ENCODE measurements at regions of chr4 and their contacts with region 1.

Region 1: GRCh38 chr4:8315435-8316250 is 46.1 kb downstream of the HTRA3 start:
- DNase-seq: peak in 1 of 2 experiments; percentile 58
- H3K4me3 ChIP-seq: no peak overlapping the region
- H3K27ac ChIP-seq: no peak overlapping the region
- H3K4me1 ChIP-seq: peaks cover 0 to 17% (median 12%) of the 10 kb centered on the region in 4 experiments; a peak in 6 of 7 replicates
- H3K27me3 ChIP-seq: no peaks in the 10 kb centered on the region; a peak in 2 of 7 replicates
- CTCF ChIP-seq: no peak
- EP300 ChIP-seq: no peak
- POLR2A ChIP-seq: no peak
- RAD21 ChIP-seq: no peak

Region 2: GRCh38 chr4:7876201-7876875 is 439.3 kb before region 1 on chr4:
- CTCF ChIA-PET with region 1: no interaction called
- POLR2A ChIA-PET with region 1: no interaction called
- DNase-seq: no peak
- H3K4me3 ChIP-seq: no peak overlapping the region
- H3K27ac ChIP-seq: no peak overlapping the region
- H3K4me1 ChIP-seq: peaks cover 0 to 3% (median 0%) of the 10 kb centered on the region in 4 experiments; a peak in 1 of 7 replicates
- H3K27me3 ChIP-seq: no peaks in the 10 kb centered on the region
- CTCF ChIP-seq: peak; percentile 39 to 62 (median 42); a peak in 3 of 4 replicates
- EP300 ChIP-seq: no peak
- POLR2A ChIP-seq: no peak
- RAD21 ChIP-seq: peak; percentile 34 to 58; a peak in 3 of 4 replicates

Region 3: DNA sequence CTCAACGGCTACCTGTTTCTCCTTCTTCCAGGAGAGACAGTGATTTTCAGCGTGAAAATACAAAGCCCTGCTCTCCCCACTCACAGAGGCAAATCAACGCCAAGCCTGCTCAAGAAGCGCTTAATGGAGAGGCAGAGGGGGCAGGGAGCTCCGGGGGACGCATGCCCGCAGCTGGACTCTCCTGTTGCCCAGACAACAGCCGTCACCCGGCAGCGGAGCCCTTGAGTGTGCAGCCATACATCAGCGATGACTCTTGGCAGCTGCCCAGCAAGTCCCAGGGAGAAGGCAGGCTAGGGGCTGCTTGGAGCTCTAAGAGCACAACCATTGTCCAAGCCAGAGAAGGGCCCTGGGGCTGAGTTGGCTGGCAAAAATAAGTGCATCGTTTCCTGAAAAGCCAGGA is 305.0 kb before region 1 on chr4:
- CTCF ChIA-PET with region 1: no interaction called
- POLR2A ChIA-PET with region 1: no interaction called
- DNase-seq: no peak
- H3K4me3 ChIP-seq: no peak overlapping the region
- H3K27ac ChIP-seq: no peak overlapping the region
- H3K4me1 ChIP-seq: peaks cover 0 to 2% (median 0%) of the 10 kb centered on the region in 4 experiments; a peak in 2 of 7 replicates
- H3K27me3 ChIP-seq: no peaks in the 10 kb centered on the region
- CTCF ChIP-seq: no peak
- EP300 ChIP-seq: no peak
- POLR2A ChIP-seq: no peak
- RAD21 ChIP-seq: no peak

Region 4: GRCh38 chr4:8035371-8035780 is 280.3 kb before region 1 on chr4:
- CTCF ChIA-PET with region 1: no interaction called
- POLR2A ChIA-PET with region 1: no interaction called
- DNase-seq: no peak
- H3K4me3 ChIP-seq: no peak overlapping the region
- H3K27ac ChIP-seq: no peak overlapping the region
- H3K4me1 ChIP-seq: peaks cover 0 to 7% (median 1%) of the 10 kb centered on the region in 4 experiments; a peak in 2 of 7 replicates
- H3K27me3 ChIP-seq: no peaks in the 10 kb centered on the region
- CTCF ChIP-seq: no peak
- EP300 ChIP-seq: no peak
- POLR2A ChIP-seq: no peak
- RAD21 ChIP-seq: no peak

Region 5: DNA sequence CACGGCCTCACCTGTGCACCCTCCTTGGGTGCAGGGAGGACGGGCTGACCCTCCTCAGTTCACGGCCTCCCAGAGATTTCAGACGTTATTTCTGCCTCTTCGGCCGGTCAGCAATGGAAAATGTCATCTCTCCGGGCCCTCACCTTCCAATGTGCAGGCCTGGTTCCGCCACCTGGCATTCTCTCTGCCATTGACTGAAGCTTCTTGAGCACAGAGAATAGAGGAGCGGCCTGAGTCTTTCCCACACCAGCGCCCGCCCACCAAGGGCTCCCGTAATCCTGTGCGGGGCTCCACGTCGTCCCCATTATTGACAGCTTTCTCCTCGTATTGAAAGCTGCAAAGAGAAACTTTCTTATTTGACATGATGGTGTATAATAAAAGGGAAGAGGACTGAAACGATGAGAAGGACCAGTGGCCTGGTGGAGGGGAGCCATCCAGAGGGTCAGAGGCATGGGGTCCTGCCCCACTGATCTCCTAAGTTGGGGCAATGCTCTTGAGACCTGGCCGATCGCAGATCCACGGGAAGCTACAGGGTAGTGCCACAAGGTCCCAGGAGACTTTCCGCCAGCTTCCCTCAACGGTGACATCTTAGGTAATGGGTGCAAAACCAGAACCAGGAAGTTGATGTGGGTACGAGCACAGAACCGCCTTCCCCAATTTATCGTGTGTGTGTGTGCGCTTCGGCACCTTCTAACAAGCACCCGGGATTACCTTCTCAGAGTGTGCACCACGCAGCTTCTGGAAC is 25.5 kb before region 1 on chr4:
- CTCF ChIA-PET with region 1: interaction called, 12 read pairs
- POLR2A ChIA-PET with region 1: no interaction called
- DNase-seq: no peak
- H3K4me3 ChIP-seq: no peak overlapping the region
- H3K27ac ChIP-seq: no peak overlapping the region
- H3K4me1 ChIP-seq: no peaks in the 10 kb centered on the region
- H3K27me3 ChIP-seq: no peaks in the 10 kb centered on the region
- CTCF ChIP-seq: no peak
- EP300 ChIP-seq: no peak
- POLR2A ChIP-seq: no peak
- RAD21 ChIP-seq: no peak

Region 6: GRCh38 chr4:8330821-8331574 is 15.4 kb after region 1 on chr4:
- CTCF ChIA-PET with region 1: interaction called, 12 read pairs
- POLR2A ChIA-PET with region 1: no interaction called
- DNase-seq: no peak
- H3K4me3 ChIP-seq: no peak overlapping the region
- H3K27ac ChIP-seq: no peak overlapping the region
- H3K4me1 ChIP-seq: no peaks in the 10 kb centered on the region
- H3K27me3 ChIP-seq: no peaks in the 10 kb centered on the region
- CTCF ChIP-seq: no peak
- EP300 ChIP-seq: no peak
- POLR2A ChIP-seq: no peak
- RAD21 ChIP-seq: no peak

Region 7: DNA sequence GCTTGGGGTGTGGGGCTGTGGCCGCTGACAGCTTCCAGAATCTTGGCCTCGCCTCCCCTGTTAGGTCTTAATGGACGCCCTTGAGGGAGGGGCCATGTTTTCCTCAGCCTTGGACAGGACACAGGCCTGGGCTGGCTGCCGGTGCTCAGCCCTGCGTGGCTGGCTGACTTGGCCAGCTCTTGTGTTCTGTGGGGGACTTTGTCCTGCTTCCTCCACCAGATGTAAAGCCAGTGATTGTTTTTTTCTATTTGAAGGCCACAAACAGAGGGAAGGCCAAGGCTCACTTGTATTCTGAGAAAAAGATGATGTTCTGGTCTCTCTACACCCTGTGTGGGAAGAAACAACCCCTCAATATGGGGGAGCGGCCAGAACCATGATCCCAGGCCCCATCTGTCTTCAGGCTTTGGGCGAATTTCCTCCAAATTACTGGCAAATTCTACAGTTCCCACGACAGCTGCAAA is 25.2 kb after region 1 on chr4:
- CTCF ChIA-PET with region 1: interaction called, 27 read pairs
- POLR2A ChIA-PET with region 1: no interaction called
- DNase-seq: no peak
- H3K4me3 ChIP-seq: no peak overlapping the region
- H3K27ac ChIP-seq: no peak overlapping the region
- H3K4me1 ChIP-seq: peaks cover 0 to 4% (median 2%) of the 10 kb centered on the region in 4 experiments; a peak in 3 of 7 replicates
- H3K27me3 ChIP-seq: no peaks in the 10 kb centered on the region
- CTCF ChIP-seq: no peak
- EP300 ChIP-seq: no peak
- POLR2A ChIP-seq: no peak
- RAD21 ChIP-seq: no peak

Region 8: DNA sequence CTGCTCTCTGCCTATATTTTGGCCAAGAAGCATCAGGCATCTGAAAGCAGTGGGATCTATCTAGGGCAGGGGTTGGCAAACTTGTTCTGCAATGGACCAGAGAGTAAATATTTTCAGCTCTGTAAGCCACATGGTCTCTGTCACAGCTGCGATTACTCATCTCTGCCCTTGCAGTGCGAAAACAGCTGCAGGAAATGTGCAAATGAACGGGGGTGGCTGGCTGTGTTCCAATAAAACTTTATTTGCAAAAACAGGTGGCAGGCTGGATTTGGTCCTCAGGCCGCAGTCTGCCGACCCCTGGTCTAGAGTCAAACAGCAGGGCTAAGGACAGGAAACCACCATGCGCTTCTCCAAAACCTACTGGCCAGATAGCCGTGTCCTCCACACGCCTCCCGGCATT is 76.3 kb after region 1 on chr4:
- CTCF ChIA-PET with region 1: interaction called, 94 read pairs
- POLR2A ChIA-PET with region 1: interaction called, 3 read pairs
- DNase-seq: no peak
- H3K4me3 ChIP-seq: no peak overlapping the region
- H3K27ac ChIP-seq: no peak overlapping the region
- H3K4me1 ChIP-seq: peaks cover 0 to 2% (median 1%) of the 10 kb centered on the region in 4 experiments; a peak in 6 of 7 replicates
- H3K27me3 ChIP-seq: no peaks in the 10 kb centered on the region
- CTCF ChIP-seq: no peak
- EP300 ChIP-seq: no peak
- POLR2A ChIP-seq: no peak
- RAD21 ChIP-seq: no peak

Region 9: DNA sequence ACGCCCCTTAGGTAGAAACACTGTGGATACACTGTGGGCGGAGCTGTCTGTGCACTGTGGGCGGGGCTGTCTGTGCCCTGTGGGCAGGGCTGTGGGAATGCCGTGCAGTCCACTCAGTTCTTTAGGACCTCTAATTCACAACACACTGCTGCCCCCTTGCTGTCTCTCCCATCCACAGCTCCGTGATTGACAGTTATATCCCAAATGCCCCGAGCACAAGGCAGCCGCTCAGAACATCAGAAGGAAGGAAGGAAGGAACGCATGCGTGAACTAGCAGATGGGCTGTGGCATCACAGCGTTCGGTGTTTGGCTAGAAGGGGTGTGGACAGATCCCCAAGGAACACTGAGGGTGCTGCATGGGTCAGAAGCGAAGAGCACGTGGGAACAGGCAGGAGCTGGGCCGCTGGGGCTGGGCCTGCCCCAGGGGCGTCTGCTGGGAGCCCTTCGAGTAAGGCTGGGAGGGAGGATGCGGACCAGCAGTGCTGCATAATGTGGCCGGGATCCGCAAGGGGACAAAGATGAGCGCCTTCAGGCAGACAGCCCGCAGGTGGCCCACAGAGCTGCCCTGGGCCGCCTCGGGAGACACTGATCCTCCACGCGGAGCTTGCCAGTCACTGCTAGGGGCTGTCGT is 95.1 kb after region 1 on chr4:
- CTCF ChIA-PET with region 1: interaction called, 32 read pairs
- POLR2A ChIA-PET with region 1: no interaction called
- DNase-seq: peak; percentile 53 to 85
- H3K4me3 ChIP-seq: no peak overlapping the region
- H3K27ac ChIP-seq: no peak overlapping the region
- H3K4me1 ChIP-seq: peaks cover 0 to 5% (median 4%) of the 10 kb centered on the region in 4 experiments; a peak in 6 of 7 replicates
- H3K27me3 ChIP-seq: no peaks in the 10 kb centered on the region
- CTCF ChIP-seq: peak in 2 of 3 experiments; percentile 62 to 73; a peak in 3 of 4 replicates
- EP300 ChIP-seq: no peak
- POLR2A ChIP-seq: no peak
- RAD21 ChIP-seq: peak; percentile 64 to 74

Region 10: DNA sequence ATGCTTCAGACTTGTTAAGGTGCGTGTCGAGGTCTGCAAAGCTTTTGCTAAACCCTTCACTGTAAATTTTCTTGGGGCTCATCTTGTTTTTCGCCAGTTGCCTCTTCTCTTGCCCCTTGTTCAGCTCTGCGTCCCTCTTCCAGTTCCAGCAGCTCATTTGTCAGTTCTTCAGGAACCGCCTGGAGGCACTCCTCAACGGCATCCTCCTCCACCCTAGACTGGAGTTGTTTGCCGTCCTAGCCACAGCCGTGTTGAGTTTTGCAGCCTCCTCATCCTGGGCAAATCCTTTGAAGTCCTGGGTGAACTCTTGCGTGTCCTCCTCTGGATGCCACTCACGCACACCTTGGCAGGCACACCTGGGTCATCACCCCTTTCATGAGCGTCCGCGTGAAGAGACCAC is 166.4 kb after region 1 on chr4:
- CTCF ChIA-PET with region 1: no interaction called
- POLR2A ChIA-PET with region 1: no interaction called
- DNase-seq: no peak
- H3K4me3 ChIP-seq: no peak overlapping the region
- H3K27ac ChIP-seq: no peak overlapping the region
- H3K4me1 ChIP-seq: peaks cover 0 to 3% (median 0%) of the 10 kb centered on the region in 4 experiments; a peak in 2 of 7 replicates
- H3K27me3 ChIP-seq: no peaks in the 10 kb centered on the region
- CTCF ChIP-seq: no peak
- EP300 ChIP-seq: no peak
- POLR2A ChIP-seq: no peak
- RAD21 ChIP-seq: no peak